ENCODE measurements at regions of chr14 and their contacts with region 1.

Region 1: GRCh38 chr14:59132796-59133494 is 55.5 kb upstream of the DAAM1 start:
- DNase-seq: no peak
- H3K4me3 ChIP-seq: no peak overlapping the region
- H3K4me3 Mint-ChIP-seq: no peak overlapping the region
- H3K27ac ChIP-seq: no peak overlapping the region
- H3K27ac Mint-ChIP-seq: no peak overlapping the region
- H3K4me1 ChIP-seq: no peaks in the 10 kb centered on the region
- H3K4me1 Mint-ChIP-seq: no peaks in the 10 kb centered on the region
- H3K27me3 ChIP-seq: no peaks in the 10 kb centered on the region
- H3K27me3 Mint-ChIP-seq: peaks cover 2 to 36% of the 10 kb centered on the region in 2 donors

Region 2: DNA sequence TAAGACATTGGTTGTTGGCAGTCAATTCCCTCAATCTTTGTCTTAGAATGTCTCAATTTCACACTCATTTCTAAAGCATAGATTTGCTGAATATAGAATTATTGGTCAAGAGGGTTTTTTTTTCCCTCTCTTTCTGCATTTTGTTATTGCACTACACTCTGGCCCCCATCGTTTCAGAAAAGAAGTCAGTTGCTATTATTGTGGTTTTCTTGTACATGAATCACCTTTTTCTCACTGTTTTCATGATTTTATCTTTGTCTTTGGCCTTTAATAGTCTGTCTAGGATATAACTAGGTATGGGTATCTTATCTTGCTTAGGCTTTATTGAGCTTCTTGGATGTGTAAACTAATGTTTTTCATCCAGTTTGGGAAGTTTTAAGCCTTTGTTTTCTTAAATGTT is 138.8 kb before region 1 on chr14:
- CTCF ChIA-PET with region 1: no interaction called
- POLR2A ChIA-PET with region 1: no interaction called
- DNase-seq: no peak
- H3K4me3 ChIP-seq: no peak overlapping the region
- H3K4me3 Mint-ChIP-seq: no peak overlapping the region
- H3K27ac ChIP-seq: no peak overlapping the region
- H3K27ac Mint-ChIP-seq: no peak overlapping the region
- H3K4me1 ChIP-seq: no peaks in the 10 kb centered on the region
- H3K4me1 Mint-ChIP-seq: no peaks in the 10 kb centered on the region
- H3K27me3 ChIP-seq: no peaks in the 10 kb centered on the region
- H3K27me3 Mint-ChIP-seq: peaks cover 0 to 3% of the 10 kb centered on the region in 2 donors

Region 3: DNA sequence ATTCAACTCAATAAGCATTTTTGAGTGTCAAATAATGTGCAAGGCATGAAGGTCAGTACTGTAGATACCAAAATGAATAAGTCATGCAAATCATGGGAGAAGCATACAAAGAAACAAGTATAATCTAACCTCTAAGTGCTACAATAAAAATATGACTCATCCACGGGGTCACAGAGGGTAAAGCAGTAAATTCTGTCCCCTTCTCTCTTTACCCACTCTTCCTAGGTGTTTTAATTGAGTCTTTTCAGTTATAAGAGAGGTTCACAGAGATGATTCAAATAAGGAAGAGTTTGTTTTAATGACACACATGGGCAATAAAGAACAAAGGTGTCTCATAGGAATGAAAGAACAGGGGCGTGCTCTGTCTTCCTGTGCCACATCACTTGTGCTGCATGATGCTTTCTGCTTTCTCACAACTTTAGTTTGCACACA is 15.9 kb before region 1 on chr14:
- CTCF ChIA-PET with region 1: no interaction called
- POLR2A ChIA-PET with region 1: no interaction called
- DNase-seq: no peak
- H3K4me3 ChIP-seq: no peak overlapping the region
- H3K4me3 Mint-ChIP-seq: no peak overlapping the region
- H3K27ac ChIP-seq: no peak overlapping the region
- H3K27ac Mint-ChIP-seq: no peak overlapping the region
- H3K4me1 ChIP-seq: no peaks in the 10 kb centered on the region
- H3K4me1 Mint-ChIP-seq: no peaks in the 10 kb centered on the region
- H3K27me3 ChIP-seq: no peaks in the 10 kb centered on the region
- H3K27me3 Mint-ChIP-seq: peaks cover 1 to 26% of the 10 kb centered on the region in 2 donors

Region 4: DNA sequence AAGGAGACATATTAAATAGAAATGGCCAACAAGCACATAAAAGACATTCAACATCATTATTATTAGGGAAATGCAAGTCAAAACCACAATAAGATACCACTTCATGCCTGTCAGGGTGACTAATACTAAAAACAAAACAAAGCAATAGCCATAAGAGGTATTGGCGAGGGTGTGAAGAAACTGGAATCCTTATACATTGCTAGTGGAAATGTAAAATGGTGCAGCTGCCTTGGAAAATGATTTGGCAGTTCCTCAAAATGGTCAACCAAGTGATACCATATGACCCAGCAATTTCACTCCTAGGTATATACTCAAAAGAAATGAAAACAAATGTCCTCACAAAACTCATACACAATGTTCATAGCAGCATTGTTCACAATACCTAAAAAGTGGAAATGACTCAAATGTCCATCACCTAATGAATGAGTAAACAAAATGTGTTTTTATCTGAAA is 305.3 kb after region 1 on chr14:
- CTCF ChIA-PET with region 1: interaction called, 21 read pairs
- POLR2A ChIA-PET with region 1: no interaction called
- DNase-seq: no peak
- H3K4me3 ChIP-seq: no peak overlapping the region
- H3K4me3 Mint-ChIP-seq: no peak overlapping the region
- H3K27ac ChIP-seq: no peak overlapping the region
- H3K27ac Mint-ChIP-seq: no peak overlapping the region
- H3K4me1 ChIP-seq: no peaks in the 10 kb centered on the region
- H3K4me1 Mint-ChIP-seq: no peaks in the 10 kb centered on the region
- H3K27me3 ChIP-seq: no peaks in the 10 kb centered on the region
- H3K27me3 Mint-ChIP-seq: no peaks in the 10 kb centered on the region

Measured in CD8-positive, alpha-beta memory T cell (primary cell).